WTC11 (cell line): ENCODE measurements at regions of chr4 and their contacts with region 1.

Region 1: DNA sequence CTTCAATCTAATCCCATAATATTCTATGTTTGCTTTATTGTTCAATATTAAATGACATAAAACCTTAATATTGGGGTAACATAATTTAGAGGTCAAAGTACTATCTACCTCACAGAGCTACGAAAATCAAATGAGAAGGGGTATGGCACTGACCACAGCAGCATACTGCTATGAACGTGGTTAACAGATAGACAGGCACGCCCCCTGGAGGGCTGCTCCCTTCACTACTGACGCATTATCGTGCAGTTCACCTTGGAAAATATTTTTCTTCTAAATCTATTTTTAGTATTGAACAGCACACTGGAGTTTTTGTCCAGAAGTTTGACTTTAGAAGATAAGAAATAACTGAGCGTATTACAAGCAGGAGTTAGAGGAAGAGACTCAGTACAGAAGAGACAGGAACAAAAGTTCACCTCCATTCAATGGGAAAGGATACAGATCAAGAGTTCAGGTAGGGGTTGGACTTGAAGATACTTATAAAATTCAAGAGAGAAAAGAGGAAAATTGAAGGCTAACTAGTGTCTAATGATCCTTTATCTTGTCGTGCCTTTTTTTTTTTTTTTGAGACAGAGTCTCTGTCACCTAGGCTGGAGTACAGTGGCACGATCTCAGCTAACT is 22.7 kb downstream of the MAP9 start:
- DNase-seq: peak; percentile 68
- ATAC-seq: peak; percentile 97
- H3K4me3 Mint-ChIP-seq: no peak overlapping the region
- H3K27ac Mint-ChIP-seq: no peak overlapping the region
- H3K4me1 Mint-ChIP-seq: no peaks in the 10 kb centered on the region
- H3K27me3 Mint-ChIP-seq: no peaks in the 10 kb centered on the region
- CTCF ChIP-seq: peak; percentile 77

Region 2: GRCh38 chr4:155025762-155026457 is 328.1 kb before region 1 on chr4:
- CTCF ChIA-PET with region 1: interaction called, 14 read pairs
- POLR2A ChIA-PET with region 1: no interaction called
- DNase-seq: peak; percentile 81
- ATAC-seq: peak; percentile 98
- H3K4me3 Mint-ChIP-seq: no peak overlapping the region
- H3K27ac Mint-ChIP-seq: no peak overlapping the region
- H3K4me1 Mint-ChIP-seq: peaks cover 5% of the 10 kb centered on the region
- H3K27me3 Mint-ChIP-seq: peaks cover 2% of the 10 kb centered on the region; the same call in 1 of the 2 replicates
- CTCF ChIP-seq: peak; percentile 68

Region 3: GRCh38 chr4:155207534-155208257 is 146.3 kb before region 1 on chr4:
- CTCF ChIA-PET with region 1: interaction called, 10 read pairs
- POLR2A ChIA-PET with region 1: no interaction called
- DNase-seq: peak; percentile 56
- ATAC-seq: peak; percentile 68
- H3K4me3 Mint-ChIP-seq: peak overlapping the region; percentile 87
- H3K27ac Mint-ChIP-seq: no peak overlapping the region
- H3K4me1 Mint-ChIP-seq: peaks cover 49% of the 10 kb centered on the region
- H3K27me3 Mint-ChIP-seq: peaks cover 48% of the 10 kb centered on the region
- CTCF ChIP-seq: no peak